Tibial artery (tissue), 4 donors: ENCODE measurements at regions of chr9 and their contacts with region 1.

Region 1: DNA sequence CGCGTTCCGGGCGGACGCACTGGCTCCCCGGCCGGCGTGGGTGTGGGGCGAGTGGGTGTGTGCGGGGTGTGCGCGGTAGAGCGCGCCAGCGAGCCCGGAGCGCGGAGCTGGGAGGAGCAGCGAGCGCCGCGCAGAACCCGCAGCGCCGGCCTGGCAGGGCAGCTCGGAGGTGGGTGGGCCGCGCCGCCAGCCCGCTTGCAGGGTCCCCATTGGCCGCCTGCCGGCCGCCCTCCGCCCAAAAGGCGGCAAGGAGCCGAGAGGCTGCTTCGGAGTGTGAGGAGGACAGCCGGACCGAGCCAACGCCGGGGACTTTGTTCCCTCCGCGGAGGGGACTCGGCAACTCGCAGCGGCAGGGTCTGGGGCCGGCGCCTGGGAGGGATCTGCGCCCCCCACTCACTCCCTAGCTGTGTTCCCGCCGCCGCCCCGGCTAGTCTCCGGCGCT is at the start of gene DAPK1:
- DNase-seq: peak; percentile 44 to 73
- H3K4me3 ChIP-seq: peak within 1 kb of the TSS; percentile 65 to 80
- H3K27ac ChIP-seq: peak within 1 kb of the TSS; percentile 51 to 53
- H3K4me1 ChIP-seq: peaks cover 0 to 19% (median 9%) of the 10 kb centered on the region in 4 donors
- H3K27me3 ChIP-seq: peaks cover 0 to 17% of the 10 kb centered on the region in 2 donors
- CTCF ChIP-seq: no peak

Region 2: DNA sequence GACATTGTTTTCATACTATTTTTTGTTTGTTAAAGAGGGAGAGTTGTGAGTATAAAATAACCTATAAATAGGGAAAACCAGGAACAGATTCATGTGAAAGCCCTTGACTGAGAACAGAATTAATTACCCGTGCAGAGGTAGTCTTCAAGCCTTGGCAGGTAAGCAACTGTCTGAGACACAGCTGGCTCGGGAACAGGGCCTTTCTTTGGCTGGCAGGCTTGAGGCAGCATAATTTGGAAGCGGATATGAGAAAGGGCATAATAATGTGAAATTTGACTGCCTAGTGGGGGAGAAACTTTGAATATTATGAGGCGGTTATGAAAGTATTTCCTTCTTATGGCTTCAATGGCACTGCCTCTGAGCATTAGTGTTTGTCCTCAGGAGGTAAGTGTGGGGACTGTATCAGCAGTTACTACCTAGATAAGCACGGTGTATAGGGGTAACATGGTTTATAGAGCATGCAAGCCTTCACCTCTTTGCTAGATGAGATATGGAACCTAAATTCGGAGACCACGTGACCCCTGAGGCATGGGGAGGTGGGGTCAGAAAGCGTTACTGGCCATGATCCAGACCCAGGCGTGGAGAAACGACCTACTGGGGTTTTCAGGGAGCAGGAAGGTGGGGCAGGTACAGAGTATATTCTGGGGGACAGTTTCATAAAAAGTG is 340.1 kb before region 1 on chr9:
- intact Hi-C with region 1: no loop called
- DNase-seq: no peak
- H3K4me3 ChIP-seq: no peak overlapping the region
- H3K27ac ChIP-seq: no peak overlapping the region
- H3K4me1 ChIP-seq: peaks cover 0 to 8% (median 3%) of the 10 kb centered on the region in 4 donors
- H3K27me3 ChIP-seq: no peaks in the 10 kb centered on the region
- CTCF ChIP-seq: no peak

Region 3: GRCh38 chr9:87336914-87337333 is 160.7 kb before region 1 on chr9:
- intact Hi-C with region 1: loop called (anchors 10 kb)
- DNase-seq: no peak
- H3K4me3 ChIP-seq: peak overlapping the region; percentile 20 to 33
- H3K27ac ChIP-seq: no peak overlapping the region
- H3K4me1 ChIP-seq: peaks cover 0 to 10% (median 9%) of the 10 kb centered on the region in 4 donors
- H3K27me3 ChIP-seq: no peaks in the 10 kb centered on the region
- CTCF ChIP-seq: peak; percentile 72 to 80

Region 4: GRCh38 chr9:87662808-87663528 is 165.3 kb after region 1 on chr9:
- intact Hi-C with region 1: loop called (anchors 10 kb)
- DNase-seq: peak; percentile 52 to 72
- H3K4me3 ChIP-seq: no peak overlapping the region
- H3K27ac ChIP-seq: no peak overlapping the region
- H3K4me1 ChIP-seq: no peaks in the 10 kb centered on the region
- H3K27me3 ChIP-seq: no peaks in the 10 kb centered on the region
- CTCF ChIP-seq: peak; percentile 55 to 58

Region 5: DNA sequence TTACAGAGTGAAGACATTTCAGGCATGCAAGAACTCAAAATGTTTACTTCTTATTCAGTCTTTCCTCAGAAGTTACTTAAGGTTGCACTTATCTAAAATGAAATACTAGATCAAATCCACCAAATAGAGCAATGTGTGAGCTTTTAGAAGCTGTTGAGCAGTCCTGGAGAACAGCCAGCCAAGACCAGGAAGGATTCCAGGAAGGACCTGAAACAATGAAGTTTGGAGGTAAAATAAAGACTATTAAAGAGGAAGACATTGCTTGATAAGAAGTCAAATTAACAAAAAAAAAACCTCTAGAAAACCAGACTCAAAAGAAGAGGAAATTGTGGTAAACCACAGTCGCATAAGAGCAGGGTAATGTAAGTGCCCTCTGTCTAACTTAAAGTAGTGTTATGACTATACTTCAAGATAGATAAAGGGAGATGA is 1337.4 kb after region 1 on chr9:
- intact Hi-C with region 1: loop called (anchors 5 kb)
- DNase-seq: no peak
- H3K4me3 ChIP-seq: no peak overlapping the region
- H3K27ac ChIP-seq: no peak overlapping the region
- H3K4me1 ChIP-seq: peaks cover 0 to 9% (median 1%) of the 10 kb centered on the region in 4 donors
- H3K27me3 ChIP-seq: no peaks in the 10 kb centered on the region
- CTCF ChIP-seq: no peak